ENCODE measurements at regions of chr1 and their contacts with region 1.

Region 1: GRCh38 chr1:182855911-182856310 is 16.8 kb downstream of the DHX9 start:
- DNase-seq: no peak
- H3K4me3 ChIP-seq: no peak overlapping the region
- H3K27ac ChIP-seq: no peak overlapping the region
- H3K4me1 ChIP-seq: no peaks in the 10 kb centered on the region
- H3K27me3 ChIP-seq: no peaks in the 10 kb centered on the region
- CTCF ChIP-seq: no peak
- EP300 ChIP-seq: no peak
- POLR2A ChIP-seq: no peak
- RAD21 ChIP-seq: no peak

Region 2: GRCh38 chr1:182839209-182840065 is 16.5 kb before region 1 on chr1 and contains the start of gene DHX9:
- CTCF ChIA-PET with region 1: no interaction called
- POLR2A ChIA-PET with region 1: interaction called, 93 read pairs
- DNase-seq: peak; percentile 69 to 99
- H3K4me3 ChIP-seq: peak within 1 kb of the TSS; percentile 88 to 99 (median 94)
- H3K27ac ChIP-seq: peak within 1 kb of the TSS; percentile 98
- H3K4me1 ChIP-seq: peaks cover 0 to 6% (median 3%) of the 10 kb centered on the region in 4 experiments; a peak in 4 of 7 replicates
- H3K27me3 ChIP-seq: no peaks in the 10 kb centered on the region
- CTCF ChIP-seq: peak; percentile 15 to 32 (median 29); a peak in 3 of 4 replicates
- EP300 ChIP-seq: no peak
- POLR2A ChIP-seq: peak; percentile 98
- RAD21 ChIP-seq: no peak
- total RNA-seq, gene DHX9: 329 and 333 TPM in 2 replicates

Region 3: DNA sequence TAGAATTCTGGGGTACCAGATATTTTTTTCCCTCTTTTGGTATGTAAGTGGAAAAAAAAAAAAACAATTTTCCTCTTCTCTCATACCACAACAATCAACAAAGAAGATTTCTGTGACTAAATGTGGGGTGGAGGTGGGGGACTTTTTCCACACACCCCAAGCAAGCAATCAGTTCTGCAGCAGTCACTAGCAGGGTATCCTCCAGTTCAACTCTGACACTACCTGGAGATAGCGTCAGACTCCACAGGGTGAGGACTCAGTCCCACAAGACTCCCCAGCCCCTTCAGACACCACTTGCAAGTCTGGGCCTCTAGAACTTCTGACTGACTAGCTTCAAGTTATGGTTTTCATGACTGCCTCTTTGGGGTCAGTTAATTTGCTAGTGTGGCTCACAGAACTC is 10.5 kb before region 1 on chr1:
- CTCF ChIA-PET with region 1: interaction called, 3 read pairs
- POLR2A ChIA-PET with region 1: interaction called, 93 read pairs
- DNase-seq: no peak
- H3K4me3 ChIP-seq: 0 out of 8 replicates have a peak overlapping the region, but pooled peaks of 1 of the 4 experiments have one; percentile 9
- H3K27ac ChIP-seq: no peak overlapping the region
- H3K4me1 ChIP-seq: peaks cover 0 to 15% (median 6%) of the 10 kb centered on the region in 4 experiments; a peak in 4 of 7 replicates
- H3K27me3 ChIP-seq: no peaks in the 10 kb centered on the region
- CTCF ChIP-seq: no peak
- EP300 ChIP-seq: no peak
- POLR2A ChIP-seq: no peak
- RAD21 ChIP-seq: no peak

Region 4: DNA sequence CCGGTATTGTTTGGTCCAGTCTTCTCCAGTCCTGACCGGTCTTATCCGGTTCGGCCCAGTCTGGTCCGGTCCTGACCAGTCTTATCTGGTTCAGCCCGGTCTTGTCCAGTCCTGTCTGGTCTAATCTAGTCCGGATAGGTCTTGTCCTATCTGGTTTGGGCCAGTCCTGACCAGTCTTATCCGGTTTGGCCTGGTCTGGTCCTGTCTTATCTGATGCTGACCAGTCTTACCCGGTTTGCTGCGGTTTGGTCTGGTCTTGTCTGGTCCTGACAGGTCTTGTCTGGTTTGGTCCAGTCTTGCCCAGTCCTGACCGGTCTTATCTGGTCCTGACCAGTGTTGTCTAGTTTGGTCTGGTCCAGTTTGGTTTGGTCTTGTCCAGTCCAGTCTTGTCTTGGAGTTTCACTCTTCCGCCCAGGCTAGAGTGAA is 13.3 kb after region 1 on chr1:
- CTCF ChIA-PET with region 1: interaction called, 6 read pairs
- POLR2A ChIA-PET with region 1: interaction called, 18 read pairs
- DNase-seq: peak in 1 of 2 experiments; percentile 85
- H3K4me3 ChIP-seq: no peak overlapping the region
- H3K27ac ChIP-seq: peak overlapping the region; percentile 61
- H3K4me1 ChIP-seq: no peaks in the 10 kb centered on the region
- H3K27me3 ChIP-seq: no peaks in the 10 kb centered on the region
- CTCF ChIP-seq: no peak
- EP300 ChIP-seq: peak in 1 of 2 experiments; percentile 94; a peak in 2 of 3 replicates
- POLR2A ChIP-seq: 0 out of 3 replicates have a peak, but pooled peaks of 1 of the 2 experiments have one; percentile 31
- RAD21 ChIP-seq: no peak

Region 5: DNA sequence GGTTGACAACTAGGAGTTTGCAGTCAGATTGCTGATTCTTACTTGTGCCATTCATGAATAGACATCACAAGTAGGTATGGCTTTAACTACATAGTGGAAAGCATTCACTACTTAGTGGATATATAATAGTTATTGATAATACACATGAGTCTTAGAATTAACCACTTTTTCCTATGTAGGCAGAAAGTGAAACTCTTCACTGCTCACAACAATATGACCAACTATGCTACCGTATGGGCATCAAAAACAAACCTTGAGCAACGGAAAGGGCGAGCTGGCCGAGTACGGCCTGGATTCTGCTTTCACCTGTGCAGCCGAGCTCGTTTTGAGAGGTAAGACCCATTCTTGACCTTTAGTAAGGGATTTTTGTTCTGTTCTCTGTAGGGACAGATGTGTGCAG is 21.9 kb after region 1 on chr1:
- CTCF ChIA-PET with region 1: interaction called, 6 read pairs
- POLR2A ChIA-PET with region 1: interaction called, 34 read pairs
- DNase-seq: no peak
- H3K4me3 ChIP-seq: no peak overlapping the region
- H3K27ac ChIP-seq: no peak overlapping the region
- H3K4me1 ChIP-seq: no peaks in the 10 kb centered on the region
- H3K27me3 ChIP-seq: no peaks in the 10 kb centered on the region
- CTCF ChIP-seq: no peak
- EP300 ChIP-seq: no peak
- POLR2A ChIP-seq: no peak
- RAD21 ChIP-seq: no peak

Region 6: DNA sequence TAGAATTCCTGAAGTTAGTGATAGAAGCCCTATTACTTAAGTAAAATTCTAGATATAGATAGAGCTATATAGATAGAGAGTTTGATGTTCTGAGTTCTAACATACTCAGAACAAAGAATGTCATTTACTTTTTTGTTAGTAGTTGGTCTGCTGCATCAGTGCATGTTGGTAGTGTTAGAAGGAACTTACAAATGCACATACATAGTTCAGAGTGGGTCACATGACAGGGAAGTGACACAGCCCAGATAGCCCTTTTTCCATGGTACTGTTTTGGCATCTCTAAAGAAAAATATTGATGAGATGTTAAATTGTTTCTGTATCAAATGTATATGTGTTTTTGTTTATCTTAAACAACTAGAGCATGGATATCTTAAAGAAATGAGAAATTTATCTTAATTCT is 29.0 kb after region 1 on chr1:
- CTCF ChIA-PET with region 1: interaction called, 7 read pairs
- POLR2A ChIA-PET with region 1: interaction called, 34 read pairs
- DNase-seq: no peak
- H3K4me3 ChIP-seq: no peak overlapping the region
- H3K27ac ChIP-seq: no peak overlapping the region
- H3K4me1 ChIP-seq: no peaks in the 10 kb centered on the region
- H3K27me3 ChIP-seq: no peaks in the 10 kb centered on the region
- CTCF ChIP-seq: no peak
- EP300 ChIP-seq: no peak
- POLR2A ChIP-seq: no peak
- RAD21 ChIP-seq: no peak